ENCODE measurements at regions of chr1 and their contacts with region 1.

Region 1: GRCh38 chr1:19096036-19096833 is 113.8 kb downstream of the UBR4 start:
- DNase-seq: peak in 1 of 3 donors; percentile 58
- ATAC-seq: peak; percentile 87 to 92 (median 89)
- H3K4me3 ChIP-seq: no peak overlapping the region
- H3K27ac ChIP-seq: no peak overlapping the region
- H3K4me1 ChIP-seq: peaks cover 0 to 12% (median 5%) of the 10 kb centered on the region in 4 donors
- H3K27me3 ChIP-seq: no peaks in the 10 kb centered on the region
- CTCF ChIP-seq: peak; percentile 47 to 67 (median 64)
- POLR2A ChIP-seq: no peak

Region 2: DNA sequence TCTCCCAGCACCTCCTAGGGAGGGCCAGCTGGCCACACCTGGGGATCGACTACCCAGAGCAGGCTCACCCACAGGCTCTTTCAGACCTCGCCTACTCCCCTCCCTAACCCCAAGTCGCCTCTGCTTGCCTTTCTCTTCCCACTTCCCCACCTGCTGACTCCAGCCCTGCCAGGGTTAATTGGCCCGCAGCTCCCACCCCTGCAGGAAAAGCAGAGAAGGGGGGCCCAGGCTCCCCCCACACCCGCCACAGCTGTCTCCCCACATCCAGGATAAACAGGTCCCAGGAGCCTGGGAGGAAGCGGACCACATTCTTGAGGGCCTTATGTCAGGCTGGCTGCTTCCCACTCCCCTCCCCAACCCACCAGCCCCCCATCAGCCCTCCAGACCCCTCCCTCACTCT is 281.8 kb before region 1 on chr1:
- intact Hi-C with region 1: no loop called
- DNase-seq: no peak
- ATAC-seq: no peak
- H3K4me3 ChIP-seq: no peak overlapping the region
- H3K27ac ChIP-seq: no peak overlapping the region
- H3K4me1 ChIP-seq: no peaks in the 10 kb centered on the region
- H3K27me3 ChIP-seq: no peaks in the 10 kb centered on the region
- CTCF ChIP-seq: no peak
- POLR2A ChIP-seq: no peak

Region 3: DNA sequence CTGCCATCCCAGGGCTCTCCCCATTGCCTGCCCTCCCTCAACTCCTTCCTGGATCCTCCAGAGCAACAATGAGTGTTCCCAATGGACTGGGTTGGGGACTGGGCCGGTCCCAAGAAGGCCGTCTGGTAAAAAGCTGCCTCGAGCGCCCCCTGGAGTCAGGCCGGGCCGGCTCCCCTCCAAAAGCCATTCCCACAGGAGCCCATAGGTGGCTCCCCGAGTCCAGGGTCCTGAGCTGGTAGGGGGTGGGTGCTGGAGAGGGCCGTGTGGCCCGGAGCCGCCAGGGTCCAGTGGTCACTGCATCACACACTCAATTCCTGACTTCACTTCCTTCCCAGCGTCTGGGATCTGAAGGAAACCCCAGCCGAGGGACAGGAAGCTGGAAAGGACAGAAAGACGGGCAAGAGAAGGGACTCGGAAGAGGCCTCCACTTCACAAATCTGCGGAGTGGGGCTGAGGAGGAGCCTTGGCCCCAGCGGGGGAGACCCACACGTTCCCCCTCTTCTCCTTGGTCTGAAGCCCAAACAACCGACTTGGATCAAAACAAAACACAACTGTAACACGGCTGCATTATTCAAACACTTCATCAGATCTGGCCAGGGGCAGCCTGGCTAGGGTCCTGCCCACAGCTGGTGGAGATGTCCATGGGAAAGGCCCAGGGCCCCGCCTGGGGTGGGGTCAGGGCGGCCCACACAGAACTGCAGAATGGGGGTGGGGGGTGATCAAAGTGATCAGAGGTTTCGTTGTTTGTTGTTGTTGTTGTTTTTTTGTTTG is 183.0 kb before region 1 on chr1:
- intact Hi-C with region 1: loop called in 1 of 2 experiments (anchors 10 kb)
- DNase-seq: peak; percentile 84 to 85 (median 84)
- ATAC-seq: peak; percentile 90 to 96 (median 92)
- H3K4me3 ChIP-seq: no peak overlapping the region
- H3K27ac ChIP-seq: peak overlapping the region in 1 of 3 donors; percentile 24
- H3K4me1 ChIP-seq: peaks cover 0 to 5% (median 0%) of the 10 kb centered on the region in 4 donors
- H3K27me3 ChIP-seq: no peaks in the 10 kb centered on the region
- CTCF ChIP-seq: peak; percentile 97 to 98 (median 98)
- POLR2A ChIP-seq: no peak